ENCODE measurements at regions of chr1 and their contacts with region 1.

Region 1: DNA sequence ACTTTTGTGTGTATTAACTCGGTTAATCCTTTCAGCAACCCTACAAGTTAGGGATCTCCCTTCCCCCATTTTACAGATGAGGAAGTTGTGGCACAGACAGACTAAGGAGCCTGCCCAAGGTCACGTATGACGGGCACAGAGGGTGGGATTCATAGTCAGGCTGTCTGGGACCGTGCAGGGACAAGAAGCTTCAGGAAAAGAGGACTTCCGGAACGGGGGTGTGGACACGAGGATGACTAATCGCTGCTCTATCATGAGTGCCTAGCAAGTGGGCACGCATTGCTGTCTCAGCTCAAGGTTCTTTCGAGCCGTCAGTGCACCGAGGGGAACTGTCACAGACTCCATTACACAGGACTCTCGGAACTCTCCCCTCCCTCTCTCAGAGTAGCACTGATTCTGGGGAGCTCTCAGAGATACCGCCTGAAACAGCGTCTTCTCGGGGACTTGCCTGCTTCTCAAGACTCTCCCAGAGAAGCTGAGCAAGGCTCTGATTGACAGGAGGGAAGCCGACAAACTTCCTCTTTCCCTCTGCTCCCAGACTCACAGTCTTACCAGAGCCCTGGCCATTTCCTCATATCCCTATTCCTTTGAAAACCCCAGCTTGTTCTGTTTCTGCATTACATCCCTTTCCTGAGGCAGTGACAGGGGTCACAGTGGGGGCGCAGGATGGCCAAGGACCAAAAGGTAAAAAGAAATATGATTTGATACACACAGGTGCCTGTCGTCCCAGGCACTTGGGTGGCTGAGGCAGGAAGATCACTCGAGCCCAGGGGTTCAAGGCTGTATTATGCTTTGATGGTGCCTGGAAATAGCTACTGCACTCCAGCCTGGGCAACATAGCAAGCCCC is 14.4 kb downstream of the FHAD1 start:
- DNase-seq: peak in 2 of 4 donors; percentile 69 to 88
- ATAC-seq: peak; percentile 80
- H3K4me3 ChIP-seq: peak overlapping the region in 1 of 2 donors; percentile 4
- H3K27ac ChIP-seq: peak overlapping the region; percentile 71 to 85
- H3K4me1 ChIP-seq: peaks cover 11 to 59% of the 10 kb centered on the region in 2 donors
- H3K27me3 ChIP-seq: no peaks in the 10 kb centered on the region
- CTCF ChIP-seq: no peak

Region 2: GRCh38 chr1:15152318-15153183 is 108.8 kb before region 1 on chr1:
- intact Hi-C with region 1: loop called in 1 of 2 experiments (anchors 10 kb)
- DNase-seq: peak; percentile 89 to 93 (median 92)
- ATAC-seq: peak; percentile 77
- H3K4me3 ChIP-seq: peak overlapping the region; percentile 80 to 82
- H3K27ac ChIP-seq: peak overlapping the region; percentile 83 to 94
- H3K4me1 ChIP-seq: peaks cover 9 to 52% of the 10 kb centered on the region in 2 donors
- H3K27me3 ChIP-seq: peaks cover 0 to 46% of the 10 kb centered on the region in 2 donors
- CTCF ChIP-seq: peak; percentile 44 to 53

Measured in left lung (tissue), 14 donors.